ENCODE measurements at regions of chr16 and their contacts with region 1.

Region 1: DNA sequence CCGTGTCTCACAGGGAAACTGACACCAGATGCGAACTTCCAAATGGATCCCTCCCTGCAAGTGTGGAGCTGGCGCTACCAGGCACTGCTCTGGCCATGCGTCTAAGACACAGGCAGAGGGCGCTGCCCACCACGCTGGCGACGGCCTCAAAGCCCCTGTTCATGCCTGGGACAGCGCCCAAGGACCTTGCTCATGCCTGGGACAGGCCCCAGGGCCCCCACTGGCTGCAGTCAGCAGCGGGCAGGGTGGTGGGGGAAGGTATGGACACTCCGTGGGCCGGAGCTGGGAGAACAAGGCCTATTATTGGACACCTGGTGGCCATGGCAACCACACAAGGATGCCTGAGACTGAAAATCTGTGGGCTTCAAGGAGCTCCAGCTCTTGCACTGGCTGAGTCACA is 8.8 kb downstream of the ZG16B start:
- DNase-seq: peak; percentile 69
- H3K4me3 ChIP-seq: no peak overlapping the region
- H3K27ac ChIP-seq: no peak overlapping the region
- H3K4me1 ChIP-seq: peaks cover 38% of the 10 kb centered on the region
- H3K27me3 ChIP-seq: no peaks in the 10 kb centered on the region
- CTCF ChIP-seq: peak; percentile 91 to 97

Region 2: DNA sequence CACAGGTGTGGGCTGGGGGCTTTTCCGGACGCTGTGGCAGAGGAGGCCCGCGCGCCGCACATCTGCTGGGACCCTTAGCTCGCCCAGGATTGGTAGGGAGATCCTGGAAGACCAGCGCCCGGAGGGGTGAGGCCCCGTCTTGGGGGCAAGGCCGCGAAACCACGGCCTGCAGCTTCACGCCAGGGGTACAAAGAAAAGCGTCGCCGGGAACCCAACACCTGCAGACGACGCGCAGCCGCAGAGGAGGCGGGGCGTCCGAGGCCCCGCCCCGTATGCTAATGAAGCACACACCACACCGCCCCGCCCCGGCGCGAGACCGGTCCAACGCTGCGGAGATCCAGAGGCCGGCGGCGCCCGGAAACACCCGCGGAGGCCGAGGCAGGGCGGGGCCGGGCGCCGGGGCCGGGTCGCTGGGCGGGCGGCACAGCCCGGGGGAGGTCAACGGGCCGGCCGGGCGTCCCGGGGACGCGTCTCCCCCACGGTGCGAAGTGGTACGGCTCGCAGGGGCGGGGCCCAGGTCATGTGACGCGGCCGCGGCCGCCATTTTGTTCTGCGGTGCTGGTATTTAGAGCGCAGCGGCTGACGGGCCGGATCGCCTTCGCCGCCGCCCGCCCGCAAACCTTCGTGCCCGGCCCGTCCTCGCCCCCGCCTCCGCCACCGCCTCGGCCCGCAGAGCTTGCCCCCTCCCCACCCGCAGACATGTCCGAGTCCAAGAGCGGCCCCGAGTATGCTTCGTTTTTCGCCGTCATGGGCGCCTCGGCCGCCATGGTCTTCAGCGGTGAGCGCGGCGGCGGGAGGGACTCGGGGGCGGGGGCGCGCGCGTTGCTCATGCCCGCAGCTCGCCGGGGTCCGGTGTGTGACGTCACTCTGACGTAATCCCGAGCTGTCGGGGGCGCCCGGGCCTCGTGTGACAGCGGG is 325.3 kb before region 1 on chr16 and contains the start of gene ATP6V0C:
- CTCF ChIA-PET with region 1: no interaction called
- dilution Hi-C with region 1: no loop called
- in situ Hi-C with region 1: no loop called
- intact Hi-C with region 1: no loop called
- DNase-seq: peak; percentile 89
- H3K4me3 ChIP-seq: peak within 1 kb of the TSS; percentile 70 to 91 (median 71)
- H3K27ac ChIP-seq: peak within 1 kb of the TSS; percentile 67
- H3K4me1 ChIP-seq: peaks cover 37% of the 10 kb centered on the region
- H3K27me3 ChIP-seq: no peaks in the 10 kb centered on the region
- CTCF ChIP-seq: no peak
- total RNA-seq, gene ATP6V0C: 41.5 to 250 TPM

Region 3: DNA sequence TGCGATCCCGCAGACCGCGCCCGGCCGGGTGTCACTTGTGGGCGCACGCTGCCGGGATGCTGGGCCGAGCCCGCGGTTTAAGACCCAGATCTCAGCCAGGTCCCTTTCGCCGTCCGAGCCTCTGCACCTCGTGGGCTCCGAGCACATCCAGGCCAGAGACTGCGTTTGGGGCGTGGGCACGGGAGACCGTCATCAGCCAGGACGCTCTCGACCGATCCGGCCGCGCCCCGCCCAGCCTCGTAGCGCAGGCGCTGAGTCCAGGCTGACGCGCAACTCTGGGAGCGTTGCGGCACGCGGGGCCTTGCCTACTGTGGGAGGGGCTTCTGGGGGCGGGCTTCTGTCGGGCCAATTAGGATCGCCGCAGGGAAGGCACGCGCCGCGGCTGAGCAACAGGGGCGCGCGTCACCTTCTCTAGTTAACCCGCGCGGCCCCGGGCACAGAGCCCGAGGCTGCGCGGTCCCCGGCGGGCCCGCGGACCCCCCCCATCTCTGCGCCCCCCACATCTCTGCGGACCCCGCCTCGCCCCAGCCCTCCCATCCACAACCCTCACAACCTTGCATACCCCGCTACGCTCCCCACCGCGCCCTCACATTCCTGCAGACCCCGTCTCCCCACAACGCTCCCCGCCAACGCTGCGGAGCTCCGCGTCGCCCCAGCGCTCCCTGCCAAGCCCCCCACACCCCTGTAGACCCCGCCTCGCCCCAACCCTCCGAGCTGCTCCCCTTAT is 307.0 kb before region 1 on chr16:
- CTCF ChIA-PET with region 1: no interaction called
- dilution Hi-C with region 1: no loop called
- in situ Hi-C with region 1: no loop called
- intact Hi-C with region 1: no loop called
- DNase-seq: peak; percentile 98
- H3K4me3 ChIP-seq: peak overlapping the region; percentile 46 to 73 (median 65)
- H3K27ac ChIP-seq: peak overlapping the region; percentile 43
- H3K4me1 ChIP-seq: peaks cover 21% of the 10 kb centered on the region
- H3K27me3 ChIP-seq: no peaks in the 10 kb centered on the region
- CTCF ChIP-seq: no peak

Region 4: GRCh38 chr16:2663553-2664546 is 175.1 kb before region 1 on chr16:
- CTCF ChIA-PET with region 1: no interaction called
- dilution Hi-C with region 1: no loop called
- in situ Hi-C with region 1: no loop called
- intact Hi-C with region 1: no loop called
- DNase-seq: peak; percentile 92
- H3K4me3 ChIP-seq: no peak overlapping the region
- H3K27ac ChIP-seq: no peak overlapping the region
- H3K4me1 ChIP-seq: no peaks in the 10 kb centered on the region
- H3K27me3 ChIP-seq: no peaks in the 10 kb centered on the region
- CTCF ChIP-seq: no peak

Region 5: GRCh38 chr16:2682209-2683021 is 156.5 kb before region 1 on chr16 and contains the start of gene KCTD5:
- CTCF ChIA-PET with region 1: interaction called, 9 read pairs
- dilution Hi-C with region 1: no loop called
- in situ Hi-C with region 1: no loop called
- intact Hi-C with region 1: loop called (anchors 1 kb)
- DNase-seq: peak; percentile 94
- H3K4me3 ChIP-seq: peak within 1 kb of the TSS; percentile 76 to 99 (median 96)
- H3K27ac ChIP-seq: peak within 1 kb of the TSS; percentile 72
- H3K4me1 ChIP-seq: no peaks in the 10 kb centered on the region
- H3K27me3 ChIP-seq: no peaks in the 10 kb centered on the region
- CTCF ChIP-seq: no peak
- total RNA-seq, gene KCTD5: 43.7 to 47.8 TPM

Region 6: DNA sequence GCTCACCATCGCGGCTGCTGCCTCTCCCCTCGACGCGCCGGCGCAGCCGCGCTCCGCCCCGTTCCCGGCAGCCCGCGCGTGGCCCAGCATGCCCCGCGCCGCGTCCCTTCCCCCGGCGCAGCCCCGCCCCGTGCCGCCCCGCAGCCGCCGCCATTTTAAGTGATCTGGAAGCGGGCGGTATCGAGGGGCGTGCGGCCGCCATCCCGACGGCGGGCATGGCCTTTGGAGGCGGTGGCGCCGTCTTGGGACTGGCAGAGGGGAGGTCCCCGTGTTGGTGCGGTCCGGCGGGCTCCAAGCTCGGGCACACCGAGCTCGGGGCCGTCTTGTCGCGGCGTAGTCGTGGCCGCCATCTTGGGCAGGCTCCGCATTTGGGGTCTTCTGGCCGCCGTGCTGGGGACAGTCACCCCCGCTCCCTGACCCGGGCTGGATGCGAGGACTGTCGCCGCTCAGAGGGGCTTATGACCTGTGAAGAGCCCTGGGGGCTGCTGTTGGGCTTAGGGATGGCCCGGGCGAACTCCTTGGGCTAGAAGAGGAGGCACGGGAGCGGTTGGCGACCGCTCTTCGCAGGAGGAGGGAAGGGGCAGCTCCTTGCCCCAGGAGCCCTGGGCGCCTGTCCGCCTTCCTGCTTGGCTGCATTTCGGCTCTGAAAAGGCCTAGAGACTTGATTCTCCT is 61.6 kb before region 1 on chr16 and contains the start of gene ELOB:
- CTCF ChIA-PET with region 1: no interaction called
- dilution Hi-C with region 1: no loop called
- in situ Hi-C with region 1: loop called in 1 of 2 experiments (anchors 10 kb)
- intact Hi-C with region 1: loop called (anchors 1 kb)
- DNase-seq: peak; percentile 76
- H3K4me3 ChIP-seq: peak within 1 kb of the TSS; percentile 69 to 97 (median 93)
- H3K27ac ChIP-seq: peak within 1 kb of the TSS; percentile 95
- H3K4me1 ChIP-seq: peaks cover 16% of the 10 kb centered on the region
- H3K27me3 ChIP-seq: no peaks in the 10 kb centered on the region
- CTCF ChIP-seq: no peak
- total RNA-seq, gene ELOB: 225 to 294 TPM

Region 7: DNA sequence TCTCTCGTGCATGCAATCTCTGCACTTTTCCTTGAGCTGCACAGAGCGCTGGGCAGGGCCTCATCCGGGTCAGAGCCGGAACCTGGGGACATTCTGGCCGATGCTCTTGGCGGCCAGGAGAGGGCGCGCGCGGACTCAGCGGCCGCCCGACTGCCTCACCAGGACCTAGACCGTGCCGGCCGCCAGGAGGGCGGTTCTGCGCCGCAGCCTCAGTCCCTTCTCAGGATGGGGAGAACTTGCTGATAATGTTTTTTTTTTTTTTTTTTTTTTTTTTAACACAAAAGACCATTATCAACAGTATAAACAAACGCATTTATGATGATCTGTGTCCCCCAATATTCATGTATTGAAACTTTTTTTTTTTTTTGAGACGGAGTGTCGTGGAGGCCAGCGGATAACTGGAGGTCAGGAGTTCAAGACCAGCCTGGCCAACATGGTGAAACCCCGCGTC is 36.0 kb after region 1 on chr16:
- CTCF ChIA-PET with region 1: interaction called, 4 read pairs
- dilution Hi-C with region 1: no loop called
- in situ Hi-C with region 1: loop called (anchors 5 kb)
- intact Hi-C with region 1: no loop called
- DNase-seq: peak; percentile 55
- H3K4me3 ChIP-seq: no peak overlapping the region
- H3K27ac ChIP-seq: no peak overlapping the region
- H3K4me1 ChIP-seq: no peaks in the 10 kb centered on the region
- H3K27me3 ChIP-seq: no peaks in the 10 kb centered on the region
- CTCF ChIP-seq: peak; percentile 89 to 90

Region 8: GRCh38 chr16:2964475-2965336 is 125.8 kb after region 1 on chr16:
- CTCF ChIA-PET with region 1: no interaction called
- dilution Hi-C with region 1: no loop called
- in situ Hi-C with region 1: no loop called
- intact Hi-C with region 1: loop called (anchors 5 kb)
- DNase-seq: peak; percentile 70
- H3K4me3 ChIP-seq: peak overlapping the region; percentile 37 to 53 (median 53)
- H3K27ac ChIP-seq: no peak overlapping the region
- H3K4me1 ChIP-seq: peaks cover 46% of the 10 kb centered on the region
- H3K27me3 ChIP-seq: no peaks in the 10 kb centered on the region
- CTCF ChIP-seq: no peak